ENCODE measurements at regions of chr5 and their contacts with region 1.

Region 1: GRCh38 chr5:43008369-43009153 is 31.6 kb downstream of the ANXA2R start:
- DNase-seq: peak; percentile 90
- ATAC-seq: peak; percentile 80 to 88

Region 2: DNA sequence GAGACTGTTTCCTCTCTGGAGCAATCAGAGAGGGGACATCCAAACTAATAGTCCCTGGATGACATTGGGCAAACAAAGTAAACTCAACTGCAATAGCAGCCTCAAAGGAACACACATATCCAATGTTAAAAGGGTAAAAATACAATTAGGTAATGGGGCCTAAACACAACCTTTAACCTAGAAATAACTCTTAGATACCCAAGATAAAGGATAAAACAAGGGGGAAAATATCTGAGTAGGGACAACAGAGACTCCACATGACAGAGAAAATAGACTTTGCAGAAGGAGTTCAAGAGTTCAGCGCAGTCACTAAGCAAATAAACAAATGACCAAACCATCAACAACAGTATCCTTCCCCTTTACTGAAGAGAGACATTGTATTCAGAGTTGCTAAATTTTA is 934.2 kb before region 1 on chr5:
- intact Hi-C with region 1: no loop called
- DNase-seq: no peak
- ATAC-seq: no peak

Region 3: DNA sequence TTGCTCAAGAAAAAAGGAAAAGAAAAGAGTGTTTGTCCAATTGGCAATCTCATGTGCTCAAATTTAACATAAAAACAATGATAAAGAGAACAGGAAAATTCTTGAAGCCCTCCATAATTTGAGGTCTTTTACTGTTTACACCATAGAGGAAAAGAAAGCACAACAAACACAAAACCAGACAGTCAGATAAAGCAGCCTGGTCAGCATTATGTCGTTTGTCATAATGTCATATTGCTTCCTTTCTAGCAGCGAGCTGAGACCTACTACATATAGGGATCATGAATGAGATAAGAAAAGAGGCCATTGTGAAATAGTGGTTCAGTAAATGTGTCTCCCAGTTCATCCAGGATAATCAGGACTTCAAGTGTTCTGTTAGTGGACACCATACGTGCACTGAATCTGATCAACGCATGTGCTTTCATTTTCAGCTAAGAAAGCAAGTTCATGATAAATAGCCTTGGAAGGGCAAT is 132.2 kb before region 1 on chr5:
- intact Hi-C with region 1: no loop called
- DNase-seq: no peak
- ATAC-seq: peak in 1 of 2 donors; percentile 41

Region 4: DNA sequence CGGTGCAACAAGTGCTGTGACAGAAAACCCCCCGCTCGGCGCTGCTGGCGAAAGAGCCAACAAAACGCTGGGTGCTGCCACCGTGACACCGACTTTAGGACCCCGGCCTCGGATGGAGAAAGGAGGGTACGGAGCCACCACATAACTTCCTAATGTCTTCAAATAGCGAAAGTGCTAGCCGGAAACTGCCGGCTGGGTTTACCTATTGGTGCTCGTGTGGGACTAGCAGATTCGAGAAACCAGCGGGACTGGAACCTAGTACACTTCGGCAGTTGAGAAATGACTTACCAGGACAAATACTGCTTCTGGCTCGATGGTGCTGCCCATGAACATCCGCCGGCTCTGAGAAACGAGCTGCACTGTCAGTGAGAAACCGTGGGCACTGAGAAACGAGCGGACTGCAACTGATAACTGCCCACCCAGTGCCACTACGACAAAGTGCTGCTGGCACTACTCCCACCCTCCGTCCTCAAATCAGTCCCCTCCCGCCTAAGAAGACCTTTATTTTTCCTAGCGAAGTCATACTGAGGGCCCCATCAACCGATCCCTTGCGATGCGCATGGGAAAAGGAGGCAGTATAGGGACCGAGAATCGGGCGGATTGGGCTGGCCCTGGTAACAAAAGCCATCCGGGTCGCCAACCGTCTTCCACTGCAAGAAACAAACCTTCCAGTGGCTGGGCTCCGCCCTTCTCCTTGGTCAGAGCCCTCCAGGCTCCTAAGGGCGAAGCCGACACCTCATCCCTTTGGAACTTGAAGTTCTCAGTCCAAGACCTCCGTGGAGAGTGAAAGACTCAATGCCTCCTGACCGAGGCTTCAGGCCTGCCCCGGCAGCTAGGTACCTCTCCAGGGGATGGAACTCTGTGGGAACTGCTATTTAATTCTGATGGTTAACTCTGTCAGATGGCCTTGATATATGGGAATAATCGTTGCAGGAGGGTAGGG is 58.5 kb after region 1 on chr5:
- intact Hi-C with region 1: loop called in 1 of 2 experiments (anchors 2 kb)
- DNase-seq: peak; percentile 89
- ATAC-seq: peak; percentile 70 to 71

Measured in left cardiac atrium (tissue), 4 donors.